AG04449 (cell line): ENCODE measurements at regions of chr12 and their contacts with region 1.

Region 1: GRCh38 chr12:13211859-13212664 is 15.5 kb downstream of the EMP1 start:
- DNase-seq: no peak
- H3K4me3 ChIP-seq: no peak overlapping the region
- CTCF ChIP-seq: peak; percentile 70

Region 2: GRCh38 chr12:12741660-12742059 is 470.4 kb before region 1 on chr12:
- CTCF ChIA-PET with region 1: no interaction called
- POLR2A ChIA-PET with region 1: no interaction called
- DNase-seq: no peak
- H3K4me3 ChIP-seq: no peak overlapping the region
- CTCF ChIP-seq: no peak

Region 3: GRCh38 chr12:12916135-12916944 is 295.7 kb before region 1 on chr12:
- CTCF ChIA-PET with region 1: interaction called, 57 read pairs
- POLR2A ChIA-PET with region 1: no interaction called
- DNase-seq: no peak
- H3K4me3 ChIP-seq: no peak overlapping the region
- CTCF ChIP-seq: peak; percentile 97

Region 4: DNA sequence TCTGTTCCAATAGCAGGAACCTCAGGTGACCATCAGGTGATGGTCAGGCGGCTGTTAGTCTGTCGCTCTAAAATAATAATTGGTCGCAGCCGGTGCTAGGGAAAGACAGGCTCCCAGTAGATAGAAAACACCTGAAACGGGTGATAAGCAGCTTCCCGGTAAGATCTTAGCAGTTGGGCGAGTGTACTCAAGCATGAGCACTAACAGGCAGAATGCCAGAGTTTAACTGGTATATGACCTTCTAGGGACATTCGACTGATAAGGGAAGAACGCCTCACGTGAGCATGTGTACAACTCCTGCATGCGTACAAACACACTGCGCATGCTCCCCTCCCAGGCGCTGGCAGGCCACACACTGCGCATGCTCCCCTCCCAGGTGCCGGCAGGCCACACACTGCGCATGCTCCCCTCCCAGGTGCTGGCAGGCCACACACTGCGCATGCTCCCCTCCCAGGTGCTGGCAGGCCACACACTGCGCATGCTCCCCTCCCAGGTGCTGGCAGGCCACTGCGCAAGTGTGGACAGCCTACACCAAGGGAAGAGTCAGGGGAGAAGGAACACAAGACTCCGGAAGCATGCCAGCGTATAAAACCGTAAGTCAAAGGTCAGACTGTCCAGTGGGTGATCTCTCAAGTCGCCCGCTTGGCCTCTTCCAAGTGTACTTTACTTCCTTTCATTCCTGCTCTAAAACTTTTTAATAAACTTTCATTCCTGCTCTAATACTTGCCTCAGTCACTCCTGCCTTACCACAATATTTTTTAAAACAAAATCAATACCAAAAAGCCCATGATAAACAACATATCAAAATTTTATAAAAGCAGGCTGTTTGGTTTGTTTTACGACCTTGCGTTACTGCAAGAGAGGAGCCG is 284.6 kb before region 1 on chr12:
- CTCF ChIA-PET with region 1: no interaction called
- POLR2A ChIA-PET with region 1: no interaction called
- DNase-seq: no peak
- H3K4me3 ChIP-seq: peak overlapping the region; percentile 55
- CTCF ChIP-seq: no peak

Region 5: DNA sequence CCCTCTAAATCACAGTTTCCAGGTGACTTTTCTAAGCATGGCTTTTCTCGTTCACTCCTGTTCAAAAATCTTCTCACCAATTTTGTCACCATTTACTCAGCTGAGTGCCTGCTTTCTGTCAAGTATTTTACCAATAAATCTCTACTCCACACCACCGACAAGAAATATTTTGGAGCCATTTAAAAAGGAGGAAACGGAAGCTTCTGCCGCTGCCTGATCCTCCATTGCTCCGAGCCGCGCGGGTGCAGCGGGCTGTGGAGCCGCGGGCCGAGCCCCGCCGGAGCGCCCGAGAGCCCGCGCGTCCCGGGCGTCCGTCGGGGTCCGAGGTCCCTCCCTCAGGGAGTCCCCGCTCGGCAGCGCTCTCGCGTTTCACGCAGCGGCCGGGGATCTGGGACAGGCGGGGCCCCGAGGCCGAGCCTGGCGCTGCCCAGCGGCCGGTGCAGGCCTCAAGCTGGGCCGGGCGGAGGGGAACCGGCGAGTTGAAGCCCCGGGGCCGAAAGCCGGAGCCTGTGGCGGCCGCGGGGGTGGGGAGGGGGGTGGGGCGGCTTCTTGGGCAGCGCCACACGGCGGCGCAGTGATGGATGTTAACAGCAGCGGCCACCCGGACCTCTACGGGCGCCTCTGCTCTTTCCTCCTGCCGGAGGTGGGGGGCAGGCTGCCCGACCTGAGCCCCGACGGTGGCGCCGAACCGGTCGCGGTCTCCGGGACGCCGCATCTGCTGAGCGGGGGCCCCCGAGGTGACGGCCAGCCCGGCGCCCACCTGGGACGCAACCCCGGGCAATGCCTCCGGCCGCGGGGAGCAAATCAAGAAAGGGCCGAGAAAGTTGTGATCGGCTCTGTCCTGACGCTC is 210.9 kb before region 1 on chr12:
- CTCF ChIA-PET with region 1: interaction called, 22 read pairs
- POLR2A ChIA-PET with region 1: no interaction called
- DNase-seq: no peak
- H3K4me3 ChIP-seq: peak overlapping the region; percentile 64
- CTCF ChIP-seq: peak; percentile 35

Region 6: DNA sequence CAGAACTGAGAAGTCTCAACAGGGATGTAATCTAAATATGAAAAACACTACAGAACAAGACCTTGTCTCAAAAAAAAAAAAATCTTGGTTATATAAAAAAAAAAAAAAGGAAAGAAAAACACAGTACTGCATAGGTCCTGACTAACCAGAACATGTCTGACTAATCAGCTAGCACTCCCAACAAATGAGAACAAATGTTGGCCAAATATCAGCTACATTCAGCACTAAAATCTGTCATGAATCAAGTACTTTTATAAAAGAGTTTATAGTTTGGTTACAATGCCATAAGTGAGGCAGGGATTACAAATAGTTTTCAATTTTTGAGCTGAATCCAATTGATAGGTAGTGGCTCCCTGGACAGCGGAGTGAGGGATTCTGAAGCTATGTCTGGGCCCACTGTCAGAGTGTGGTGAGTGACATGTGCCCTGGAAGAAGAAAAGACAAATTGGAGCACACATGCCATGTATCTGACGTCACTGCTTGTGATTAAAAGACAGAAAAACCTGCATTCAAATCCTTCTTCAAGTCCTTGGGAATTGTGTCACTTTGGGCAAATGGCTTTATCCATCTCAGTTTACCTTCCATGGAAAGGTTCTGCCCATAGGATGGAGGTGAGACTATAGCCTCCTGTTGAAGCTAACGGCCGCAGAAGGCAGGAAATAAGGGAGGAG is 173.4 kb before region 1 on chr12:
- CTCF ChIA-PET with region 1: interaction called, 18 read pairs
- POLR2A ChIA-PET with region 1: no interaction called
- DNase-seq: peak; percentile 65
- H3K4me3 ChIP-seq: no peak overlapping the region
- CTCF ChIP-seq: no peak

Region 7: GRCh38 chr12:13088496-13088895 is 123.6 kb before region 1 on chr12:
- CTCF ChIA-PET with region 1: interaction called, 51 read pairs
- POLR2A ChIA-PET with region 1: no interaction called
- DNase-seq: no peak
- H3K4me3 ChIP-seq: no peak overlapping the region
- CTCF ChIP-seq: no peak

Region 8: GRCh38 chr12:13135371-13136178 is 76.5 kb before region 1 on chr12:
- CTCF ChIA-PET with region 1: interaction called, 14 read pairs
- POLR2A ChIA-PET with region 1: no interaction called
- DNase-seq: peak; percentile 41
- H3K4me3 ChIP-seq: peak overlapping the region; percentile 29
- CTCF ChIP-seq: peak; percentile 46

Region 9: GRCh38 chr12:13223179-13223859 is 11.3 kb after region 1 on chr12:
- CTCF ChIA-PET with region 1: interaction called, 103 read pairs
- POLR2A ChIA-PET with region 1: interaction called, 4 read pairs
- DNase-seq: peak; percentile 77
- H3K4me3 ChIP-seq: no peak overlapping the region
- CTCF ChIP-seq: no peak

Region 10: DNA sequence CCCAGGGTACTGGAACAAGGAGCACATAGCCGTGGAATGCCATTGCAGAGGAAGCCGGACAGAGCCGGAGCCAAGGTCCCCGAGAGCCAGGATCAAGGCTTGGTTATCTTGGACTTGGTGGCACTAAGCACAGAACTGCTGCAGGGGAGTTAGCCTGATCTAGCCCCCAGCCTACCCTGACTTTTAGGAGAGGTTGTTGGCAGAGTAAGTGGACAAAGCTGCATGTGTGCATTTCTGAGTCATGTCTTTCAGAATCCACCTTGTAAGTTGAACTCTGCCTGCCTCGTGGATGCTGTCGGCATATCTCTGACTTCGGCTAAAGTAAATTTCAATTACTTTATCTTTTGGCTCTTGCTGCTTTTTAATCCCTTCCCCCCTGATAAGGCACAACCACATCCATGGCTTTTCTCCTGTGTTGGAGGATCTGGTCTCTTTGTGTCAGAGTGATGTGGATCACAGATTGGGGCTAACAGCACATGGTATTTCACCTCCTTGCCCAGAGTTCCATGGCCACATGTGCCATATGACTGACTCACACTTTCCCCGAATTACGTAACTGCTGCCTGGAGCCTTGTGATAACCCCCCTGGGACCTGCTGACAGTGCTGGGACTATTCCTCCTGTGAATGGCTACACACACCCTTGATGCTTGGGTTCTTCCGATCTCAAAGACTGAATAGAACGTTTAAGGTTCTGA is 224.8 kb after region 1 on chr12:
- CTCF ChIA-PET with region 1: no interaction called
- POLR2A ChIA-PET with region 1: no interaction called
- DNase-seq: no peak
- H3K4me3 ChIP-seq: no peak overlapping the region
- CTCF ChIP-seq: no peak